ENCODE measurements at regions of chr3 and their contacts with region 1.

Region 1: GRCh38 chr3:107927361-107928083 is 163.3 kb downstream of the CD47 start:
- DNase-seq: no peak
- H3K4me3 ChIP-seq: peak overlapping the region; percentile 53
- H3K27me3 ChIP-seq: peaks cover 3% of the 10 kb centered on the region; the same call in 1 of the 2 replicates
- CTCF ChIP-seq: peak; percentile 97

Region 2: GRCh38 chr3:107831590-107831989 is 95.9 kb before region 1 on chr3:
- CTCF ChIA-PET with region 1: no interaction called
- POLR2A ChIA-PET with region 1: no interaction called
- DNase-seq: no peak
- H3K4me3 ChIP-seq: no peak overlapping the region
- H3K27me3 ChIP-seq: no peaks in the 10 kb centered on the region
- CTCF ChIP-seq: no peak

Region 3: DNA sequence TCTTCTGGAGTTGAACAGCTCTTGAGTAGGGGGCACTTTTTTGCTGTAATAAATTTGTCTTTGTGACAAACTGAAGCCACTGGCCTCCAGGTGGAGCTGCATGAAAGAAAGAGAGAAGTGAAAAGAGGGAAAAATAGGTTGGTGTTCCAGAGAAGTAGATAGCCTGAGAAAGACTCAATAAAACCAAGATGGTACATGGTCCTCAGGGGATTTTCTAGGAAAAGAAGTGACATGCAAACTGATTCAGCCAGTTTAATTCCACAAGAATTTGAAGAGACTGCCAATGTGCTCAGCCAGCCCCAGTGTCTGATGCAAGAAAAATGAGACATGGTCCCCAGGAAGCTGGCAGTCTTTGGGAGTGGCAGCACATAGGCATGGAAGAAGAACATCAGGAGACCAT is 10.6 kb after region 1 on chr3:
- CTCF ChIA-PET with region 1: interaction called, 16 read pairs
- POLR2A ChIA-PET with region 1: no interaction called
- DNase-seq: no peak
- H3K4me3 ChIP-seq: no peak overlapping the region
- H3K27me3 ChIP-seq: peaks cover 6% of the 10 kb centered on the region
- CTCF ChIP-seq: peak; percentile 63

Region 4: GRCh38 chr3:107956991-107957900 is 29.7 kb after region 1 on chr3:
- CTCF ChIA-PET with region 1: interaction called, 10 read pairs
- POLR2A ChIA-PET with region 1: interaction called, 9 read pairs
- DNase-seq: peak; percentile 71
- H3K4me3 ChIP-seq: peak overlapping the region; percentile 2; the same call in 1 of the 2 replicates
- H3K27me3 ChIP-seq: no peaks in the 10 kb centered on the region
- CTCF ChIP-seq: no peak

Measured in BJ (cell line).